Breast epithelium (tissue), 4 donors: ENCODE measurements at regions of chr10 and their contacts with region 1.

Region 1: DNA sequence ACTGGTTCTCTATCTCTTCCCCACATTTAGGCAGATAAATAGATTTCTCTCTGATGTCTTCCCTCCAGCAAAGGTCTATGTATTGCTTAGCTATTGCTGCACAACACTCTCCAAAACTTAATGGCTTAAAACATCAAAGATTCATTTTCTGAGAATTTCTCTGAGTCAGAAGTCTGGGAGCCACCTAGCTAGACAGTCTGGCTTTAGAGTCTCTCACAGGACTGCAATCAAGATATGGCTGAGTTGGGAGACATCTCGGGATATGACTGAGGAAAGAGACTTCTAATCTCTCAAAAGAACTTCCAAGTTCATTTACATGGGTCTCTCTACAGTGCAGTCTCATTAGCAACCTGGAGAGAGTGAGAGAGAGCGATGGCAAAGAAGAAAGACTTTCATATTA is 553.6 kb upstream of the GHITM start:
- DNase-seq: no peak
- H3K4me3 ChIP-seq: no peak overlapping the region
- H3K27ac ChIP-seq: no peak overlapping the region
- H3K4me1 ChIP-seq: no peaks in the 10 kb centered on the region
- H3K27me3 ChIP-seq: no peaks in the 10 kb centered on the region
- CTCF ChIP-seq: no peak
- POLR2A ChIP-seq: no peak

Region 2: DNA sequence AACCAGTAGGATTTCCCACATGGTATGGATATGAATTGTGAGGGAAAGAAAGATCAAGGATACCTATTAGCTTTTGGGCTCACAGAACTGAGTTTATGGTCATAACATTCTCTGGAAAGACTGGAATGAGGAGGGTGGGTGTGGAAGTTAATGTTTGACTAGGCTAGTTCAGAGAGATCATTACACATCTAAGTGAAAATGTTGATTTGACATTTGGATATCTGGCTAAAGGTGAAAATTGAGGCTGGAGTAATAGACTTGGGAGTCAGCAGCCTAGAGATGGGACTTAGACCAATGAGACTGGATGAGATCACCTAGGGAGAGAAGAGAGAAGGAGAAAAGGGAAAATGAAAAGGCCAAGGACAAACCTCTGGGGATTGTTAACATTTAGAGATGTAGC is 1180.0 kb after region 1 on chr10:
- intact Hi-C with region 1: loop called (anchors 5 kb)
- DNase-seq: no peak
- H3K4me3 ChIP-seq: no peak overlapping the region
- H3K27ac ChIP-seq: no peak overlapping the region
- H3K4me1 ChIP-seq: no peaks in the 10 kb centered on the region
- H3K27me3 ChIP-seq: no peaks in the 10 kb centered on the region
- CTCF ChIP-seq: no peak
- POLR2A ChIP-seq: no peak